Right ventricle myocardium inferior (tissue), 1 donor: ENCODE measurements at regions of chr11 and their contacts with region 1.

Region 1: DNA sequence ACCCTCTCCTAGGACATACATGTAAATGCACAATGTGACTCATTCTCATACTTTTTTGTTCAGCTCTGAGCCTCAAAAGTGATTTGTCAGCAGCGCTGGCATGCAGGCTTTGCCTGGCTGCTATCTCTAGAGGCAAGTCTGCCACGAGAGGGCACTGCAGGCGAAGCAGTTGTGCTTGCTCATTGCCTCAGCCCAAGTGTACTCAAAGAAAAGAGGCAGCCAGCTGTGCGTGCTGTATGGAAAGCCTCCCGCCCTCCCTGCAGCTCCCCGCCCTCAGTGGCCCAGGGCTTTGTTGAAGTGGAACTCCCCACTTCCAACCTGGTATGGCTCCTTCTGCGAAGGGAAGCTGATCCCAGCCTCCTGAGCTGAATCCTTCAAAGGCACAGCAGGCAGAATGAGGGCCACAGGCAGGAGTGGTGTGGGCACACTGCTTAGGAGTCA is 16.3 kb downstream of the SDHAF2 start:
- DNase-seq: peak; percentile 94
- ATAC-seq: peak; percentile 86

Region 2: DNA sequence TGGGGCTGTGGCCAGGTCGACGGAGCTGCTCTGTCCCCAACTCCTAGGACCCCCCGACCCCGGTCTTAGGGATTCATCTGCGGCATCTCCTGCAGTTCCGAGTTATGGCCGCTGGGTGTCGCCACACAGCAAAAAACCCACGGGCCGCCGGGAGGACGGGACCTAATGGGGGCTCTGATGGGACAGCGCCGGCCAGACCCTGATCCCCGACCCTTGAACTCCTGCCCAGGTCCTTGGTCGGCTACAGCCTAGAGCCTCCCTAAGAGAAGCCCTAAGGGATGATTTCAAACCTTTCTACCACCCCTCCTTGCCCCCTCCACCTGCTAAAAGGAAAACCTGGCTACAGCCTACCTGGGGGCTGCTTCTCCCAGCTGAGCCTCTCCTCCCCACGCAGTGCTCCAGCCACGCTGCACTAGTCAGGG is 31.5 kb after region 1 on chr11:
- intact Hi-C with region 1: loop called (anchors 2 kb)
- DNase-seq: peak; percentile 78
- ATAC-seq: no peak

Region 3: DNA sequence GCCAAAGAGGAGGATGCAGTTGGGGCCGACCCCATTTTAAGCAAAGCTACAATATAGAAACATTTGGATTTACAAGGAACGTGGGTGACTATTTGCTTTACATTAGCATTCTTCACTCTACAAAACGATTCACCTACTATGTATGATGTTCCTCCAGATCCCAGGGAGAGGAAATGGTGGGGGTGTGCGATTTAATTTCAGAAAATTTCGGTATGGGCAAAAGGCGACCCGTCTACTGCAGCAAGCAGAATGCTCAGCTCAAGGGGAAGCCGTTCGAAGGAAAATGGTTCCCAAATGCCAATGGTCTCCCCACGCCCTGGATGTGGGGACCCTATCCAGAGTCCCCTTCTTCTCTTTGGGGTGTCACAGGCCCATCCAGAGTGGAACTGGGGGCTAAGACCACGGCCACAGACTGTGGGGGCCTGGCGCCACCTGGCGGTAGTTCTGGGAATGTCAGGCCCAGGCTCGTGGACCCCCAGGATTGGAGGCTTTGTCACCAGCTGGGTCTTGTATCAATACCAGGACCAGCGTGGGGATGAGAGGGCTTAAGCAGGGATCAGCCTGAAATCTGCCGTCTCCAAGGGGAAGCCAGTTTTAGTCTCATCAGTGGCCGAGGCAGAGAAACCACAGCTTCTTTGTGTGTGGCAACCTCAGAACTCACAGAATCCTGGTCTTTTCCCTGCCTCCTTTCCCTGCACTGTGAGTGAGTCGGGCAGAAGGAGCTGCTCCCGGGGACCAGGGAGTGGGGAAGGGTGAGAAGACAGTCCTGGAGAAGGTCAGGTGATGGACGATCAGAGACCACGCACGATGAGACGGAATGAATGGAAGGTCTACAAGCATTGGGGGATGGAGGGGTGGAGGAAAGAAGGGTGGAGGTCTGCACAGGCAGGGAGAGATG is 70.7 kb after region 1 on chr11:
- intact Hi-C with region 1: loop called (anchors 2 kb)
- DNase-seq: peak; percentile 73
- ATAC-seq: peak; percentile 48

Region 4: DNA sequence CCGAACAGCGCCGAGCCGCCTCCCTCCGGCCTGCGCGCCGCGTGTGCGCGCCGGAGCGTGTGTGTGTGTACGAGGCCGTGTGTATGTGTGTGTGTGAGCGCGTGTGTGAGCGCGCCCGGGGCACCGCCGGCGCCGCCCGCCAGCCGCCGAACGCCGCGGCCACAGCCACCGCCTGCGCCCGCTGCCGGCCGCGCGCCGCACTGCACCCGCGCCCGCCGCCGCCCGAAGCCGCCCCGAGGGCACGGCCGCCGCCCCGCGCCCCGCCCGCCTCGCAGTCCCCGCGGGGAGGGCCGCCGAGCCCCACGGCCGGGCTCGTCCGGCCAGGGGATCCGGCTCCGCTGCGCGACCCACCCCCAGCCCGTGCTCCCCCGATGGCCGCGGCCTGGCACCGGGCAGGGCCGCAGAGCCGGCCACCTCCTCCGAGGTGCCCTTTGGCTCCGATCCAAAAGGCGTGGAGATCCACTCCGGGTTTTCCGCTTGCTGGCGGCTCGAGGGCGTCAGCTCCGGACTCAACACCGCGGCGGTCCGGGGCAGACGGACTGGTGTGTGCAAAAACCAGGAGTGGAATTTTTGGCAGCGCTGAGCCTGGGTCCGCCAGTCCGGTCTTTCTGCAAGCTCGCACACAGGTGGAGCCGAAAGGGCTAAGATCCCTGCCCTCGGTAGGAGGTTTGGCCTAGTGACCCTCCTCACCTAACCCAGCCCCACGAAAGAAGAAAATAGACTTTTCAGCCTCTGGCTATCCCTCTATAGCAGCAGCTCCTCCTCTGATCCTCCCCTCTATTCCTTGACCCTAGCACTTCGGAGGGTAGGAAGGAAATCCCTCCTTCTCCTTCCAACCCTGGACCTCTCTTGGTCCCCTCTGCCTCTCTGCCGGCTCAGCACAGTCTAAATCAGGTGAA is 135.0 kb after region 1 on chr11 and contains the start of gene SYT7:
- intact Hi-C with region 1: loop called (anchors 2 kb)
- DNase-seq: peak; percentile 95
- ATAC-seq: peak; percentile 86
- total RNA-seq, gene SYT7: 28.2 TPM

Region 5: DNA sequence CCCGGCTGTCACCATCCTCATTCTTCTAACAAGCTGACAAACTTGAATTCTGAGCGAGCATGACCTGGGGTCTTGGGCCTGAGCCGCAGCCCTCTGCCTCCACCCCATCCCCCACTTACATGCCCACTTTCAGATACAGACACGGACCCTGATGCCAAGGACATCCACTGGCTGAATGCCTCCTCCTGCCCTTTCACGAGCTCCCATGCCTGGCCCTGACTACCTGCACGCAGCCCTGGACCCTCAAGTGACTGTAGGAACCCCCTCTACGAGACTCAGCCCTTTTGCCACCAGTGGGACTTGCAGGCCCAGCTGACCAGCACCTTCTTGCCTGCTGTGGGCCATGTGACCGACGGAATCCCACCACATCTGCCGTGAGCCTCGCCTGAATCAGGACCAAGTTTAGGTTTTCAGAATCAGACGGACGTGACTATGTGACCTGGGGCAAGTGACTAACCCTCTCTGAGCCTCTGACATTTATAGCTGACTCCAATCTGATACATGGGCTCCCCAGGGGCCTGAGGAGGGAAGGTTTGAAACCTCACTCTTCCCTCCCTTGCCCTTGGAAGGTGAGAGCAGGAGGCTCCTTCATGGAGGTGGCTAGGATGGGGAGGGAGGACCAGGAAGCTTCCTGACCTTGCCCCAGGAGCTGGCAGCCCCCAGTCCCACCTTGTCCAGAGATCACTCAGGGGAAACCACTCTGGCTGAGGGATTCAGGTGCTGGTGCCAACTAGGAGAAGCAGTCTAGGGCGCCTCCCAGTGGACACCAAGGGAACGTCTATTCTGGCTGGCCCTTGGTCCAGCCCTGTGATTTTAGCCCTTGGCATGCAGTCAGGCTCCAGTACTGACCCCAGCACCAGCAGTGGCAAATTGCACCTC is 181.6 kb after region 1 on chr11:
- intact Hi-C with region 1: loop called (anchors 1 kb)
- DNase-seq: peak; percentile 77
- ATAC-seq: peak; percentile 76